ENCODE measurements at regions of chr7 and their contacts with region 1.

Region 1: GRCh38 chr7:55086413-55087201 is 67.8 kb downstream of the EGFR start:
- DNase-seq: peak; percentile 47
- ATAC-seq: peak; percentile 98
- H3K4me3 Mint-ChIP-seq: peak overlapping the region; percentile 29
- H3K27ac Mint-ChIP-seq: no peak overlapping the region
- H3K4me1 Mint-ChIP-seq: peaks cover 24% of the 10 kb centered on the region
- H3K27me3 Mint-ChIP-seq: peaks cover 25% of the 10 kb centered on the region
- CTCF ChIP-seq: no peak

Region 2: DNA sequence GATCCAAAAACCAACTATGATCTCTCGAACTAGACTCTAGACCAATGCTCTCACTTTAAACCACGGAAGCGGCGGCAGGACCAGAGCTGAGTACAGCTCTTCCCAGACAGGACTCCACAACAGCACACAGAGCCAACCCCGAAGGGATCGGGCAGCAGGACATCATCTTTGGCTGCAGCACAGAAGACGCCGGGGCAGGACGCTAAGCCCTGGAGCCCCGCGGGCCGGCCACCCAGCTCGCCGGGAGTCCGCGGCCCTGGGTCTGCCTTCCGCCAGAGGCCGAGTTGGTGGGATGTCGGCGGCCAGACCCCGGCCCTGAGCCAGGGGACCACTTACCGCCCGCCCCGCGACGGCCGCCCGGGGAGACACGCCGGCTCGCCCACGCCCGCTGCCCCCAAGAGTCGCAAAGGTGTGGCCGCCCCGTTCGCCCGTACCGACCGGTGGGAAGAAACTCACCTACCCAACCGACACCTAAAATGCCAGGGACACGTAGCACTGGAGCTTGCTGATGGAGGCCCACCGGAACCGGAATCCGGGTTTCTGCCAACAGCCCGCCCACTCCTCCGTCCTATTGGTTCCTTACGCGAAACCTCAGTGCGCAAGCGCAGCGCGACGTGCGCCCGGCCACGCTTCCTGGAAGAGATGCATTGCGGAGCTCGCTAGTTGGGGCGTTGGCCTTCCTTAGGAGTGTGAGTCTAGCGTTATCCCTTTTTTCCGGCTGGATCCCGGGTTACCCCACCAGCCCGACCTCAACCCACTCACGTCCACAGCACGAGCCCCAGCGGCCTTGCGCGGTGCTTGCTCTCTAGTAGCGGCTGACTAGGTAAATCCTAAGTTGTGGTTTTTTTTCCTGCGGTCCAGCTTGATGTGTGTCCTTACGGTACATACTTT is 327.7 kb before region 1 on chr7 and contains the start of gene SEC61G:
- CTCF ChIA-PET with region 1: no interaction called
- POLR2A ChIA-PET with region 1: interaction called, 11 read pairs
- intact Hi-C with region 1: loop called (anchors 5 kb)
- DNase-seq: peak; percentile 89
- ATAC-seq: peak; percentile 95
- H3K4me3 Mint-ChIP-seq: peak within 1 kb of the TSS; percentile 98
- H3K27ac Mint-ChIP-seq: peak within 1 kb of the TSS; percentile 92
- H3K4me1 Mint-ChIP-seq: peaks cover 21% of the 10 kb centered on the region
- H3K27me3 Mint-ChIP-seq: no peaks in the 10 kb centered on the region
- CTCF ChIP-seq: no peak
- total RNA-seq, gene SEC61G: 57.3 and 65.8 TPM in 2 replicates

Region 3: GRCh38 chr7:55073945-55074499 is 12.6 kb before region 1 on chr7:
- CTCF ChIA-PET with region 1: no interaction called
- POLR2A ChIA-PET with region 1: interaction called, 15 read pairs
- intact Hi-C with region 1: loop called (anchors 1 kb)
- DNase-seq: peak; percentile 27
- ATAC-seq: peak; percentile 86
- H3K4me3 Mint-ChIP-seq: peak overlapping the region; percentile 70
- H3K27ac Mint-ChIP-seq: peak overlapping the region; percentile 73
- H3K4me1 Mint-ChIP-seq: peaks cover 23% of the 10 kb centered on the region
- H3K27me3 Mint-ChIP-seq: peaks cover 5% of the 10 kb centered on the region
- CTCF ChIP-seq: no peak

Region 4: GRCh38 chr7:55110661-55111361 is 24.2 kb after region 1 on chr7:
- CTCF ChIA-PET with region 1: no interaction called
- POLR2A ChIA-PET with region 1: no interaction called
- intact Hi-C with region 1: no loop called
- DNase-seq: no peak
- ATAC-seq: no peak
- H3K4me3 Mint-ChIP-seq: no peak overlapping the region
- H3K27ac Mint-ChIP-seq: no peak overlapping the region
- H3K4me1 Mint-ChIP-seq: no peaks in the 10 kb centered on the region
- H3K27me3 Mint-ChIP-seq: peaks cover 29% of the 10 kb centered on the region
- CTCF ChIP-seq: no peak

Region 5: DNA sequence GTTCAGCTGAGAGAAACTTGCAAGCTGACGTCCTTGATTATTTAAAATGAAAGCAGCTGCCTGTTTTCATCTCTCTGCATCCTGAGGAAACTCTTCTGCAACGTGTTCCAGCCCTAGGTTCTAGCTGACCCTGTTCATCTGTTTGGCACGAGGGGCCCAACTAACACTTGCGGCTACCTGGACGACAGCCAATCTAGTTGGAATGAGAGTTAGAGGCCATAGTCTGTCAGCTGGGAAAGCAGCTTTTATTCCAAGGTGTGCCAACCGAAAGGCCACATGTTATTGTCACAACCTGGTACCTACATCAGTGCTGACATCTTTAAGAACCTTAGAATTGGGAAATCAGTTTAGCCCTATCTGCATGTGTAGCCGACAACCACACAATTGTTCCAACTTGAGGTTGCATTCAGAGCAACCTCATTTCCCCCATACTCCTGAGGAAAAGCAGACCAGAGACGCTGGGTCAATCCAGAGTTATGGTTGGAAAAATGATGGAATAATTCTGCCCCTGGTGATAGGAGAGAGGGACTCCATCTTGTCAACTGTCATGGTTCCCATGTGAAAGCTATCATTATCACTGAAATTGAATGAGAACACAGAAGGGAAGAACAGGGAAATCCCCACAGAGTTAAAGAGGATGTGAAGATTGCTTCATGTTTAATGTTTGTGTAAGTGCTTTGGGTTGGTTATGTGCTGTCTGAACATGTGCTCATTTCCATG is 53.8 kb after region 1 on chr7:
- CTCF ChIA-PET with region 1: no interaction called
- POLR2A ChIA-PET with region 1: no interaction called
- intact Hi-C with region 1: loop called (anchors 5 kb)
- DNase-seq: no peak
- ATAC-seq: peak; percentile 67
- H3K4me3 Mint-ChIP-seq: no peak overlapping the region
- H3K27ac Mint-ChIP-seq: no peak overlapping the region
- H3K4me1 Mint-ChIP-seq: peaks cover 7% of the 10 kb centered on the region
- H3K27me3 Mint-ChIP-seq: peaks cover 9% of the 10 kb centered on the region
- CTCF ChIP-seq: no peak

Region 6: GRCh38 chr7:55365675-55366460 is 279.3 kb after region 1 on chr7:
- CTCF ChIA-PET with region 1: no interaction called
- POLR2A ChIA-PET with region 1: no interaction called
- intact Hi-C with region 1: no loop called
- DNase-seq: peak; percentile 99
- ATAC-seq: peak; percentile 86
- H3K4me3 Mint-ChIP-seq: peak overlapping the region; percentile 94
- H3K27ac Mint-ChIP-seq: peak overlapping the region; percentile 96
- H3K4me1 Mint-ChIP-seq: peaks cover 24% of the 10 kb centered on the region
- H3K27me3 Mint-ChIP-seq: no peaks in the 10 kb centered on the region
- CTCF ChIP-seq: no peak

Measured in activated B cell treated with CpG ODN at 0.5 μM for 24 hours (primary cell).